Activated naive CD8-positive, alpha-beta T cell treated with anti-CD3 and anti-CD28 coated beads, Interleukin-2, amount 10 ng/mL, durations not matched to agents 7 days and 5 days (primary cell): ENCODE measurements at regions of chr11 and their contacts with region 1.

Region 1: DNA sequence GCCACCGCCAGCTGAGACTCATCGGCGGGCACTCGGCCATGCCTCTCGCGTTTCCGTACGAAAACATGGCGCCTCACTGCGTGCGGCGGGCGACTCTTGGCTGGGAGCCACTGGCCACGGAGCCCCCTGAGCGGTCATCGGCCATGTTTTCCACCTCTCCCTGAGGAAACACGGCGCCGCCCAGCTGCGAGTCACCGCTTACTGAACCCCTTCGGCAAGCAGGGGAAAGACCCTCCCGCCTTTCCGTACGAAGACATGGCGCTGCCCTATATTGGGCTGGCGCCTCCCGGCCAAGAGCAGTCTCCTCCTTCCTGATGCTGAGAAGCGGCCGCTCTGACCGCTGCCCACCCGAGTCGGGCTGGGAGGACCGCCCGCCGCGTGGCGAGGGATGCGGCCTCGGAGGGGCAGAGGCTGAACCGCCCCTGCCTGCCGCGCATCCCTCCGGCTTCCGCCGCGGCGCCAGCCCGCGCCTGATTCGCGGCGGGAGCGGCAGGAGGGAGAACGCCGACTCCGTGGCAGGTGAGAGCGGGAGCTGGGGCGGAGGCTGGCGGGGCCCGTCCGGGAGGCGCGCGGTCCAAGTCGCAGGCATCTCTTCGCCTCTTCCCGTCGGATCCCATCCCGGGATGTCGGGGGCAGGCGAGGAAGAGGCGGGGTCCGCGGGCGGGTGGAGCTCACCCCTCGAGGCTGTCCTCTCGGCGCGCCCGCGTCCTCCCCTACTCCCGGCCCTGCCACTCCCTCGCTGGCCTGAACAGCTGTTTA is at the start of gene TCP11L1:
- DNase-seq: peak; percentile 82
- ATAC-seq: peak; percentile 83
- H3K4me3 Mint-ChIP-seq: peak within 1 kb of the TSS; percentile 90
- H3K27ac Mint-ChIP-seq: peak within 1 kb of the TSS; percentile 92
- H3K4me1 Mint-ChIP-seq: peaks cover 15% of the 10 kb centered on the region
- H3K27me3 Mint-ChIP-seq: peaks cover 2% of the 10 kb centered on the region
- total RNA-seq, gene TCP11L1: 21.2 to 21.5 TPM

Region 2: GRCh38 chr11:32893343-32894148 is 145.9 kb before region 1 on chr11:
- POLR2A ChIA-PET with region 1: interaction called, 12 read pairs
- DNase-seq: peak; percentile 71
- ATAC-seq: peak; percentile 38
- H3K4me3 Mint-ChIP-seq: peak overlapping the region; percentile 98
- H3K27ac Mint-ChIP-seq: peak overlapping the region; percentile 91
- H3K4me1 Mint-ChIP-seq: peaks cover 20% of the 10 kb centered on the region
- H3K27me3 Mint-ChIP-seq: peaks cover 15% of the 10 kb centered on the region

Region 3: DNA sequence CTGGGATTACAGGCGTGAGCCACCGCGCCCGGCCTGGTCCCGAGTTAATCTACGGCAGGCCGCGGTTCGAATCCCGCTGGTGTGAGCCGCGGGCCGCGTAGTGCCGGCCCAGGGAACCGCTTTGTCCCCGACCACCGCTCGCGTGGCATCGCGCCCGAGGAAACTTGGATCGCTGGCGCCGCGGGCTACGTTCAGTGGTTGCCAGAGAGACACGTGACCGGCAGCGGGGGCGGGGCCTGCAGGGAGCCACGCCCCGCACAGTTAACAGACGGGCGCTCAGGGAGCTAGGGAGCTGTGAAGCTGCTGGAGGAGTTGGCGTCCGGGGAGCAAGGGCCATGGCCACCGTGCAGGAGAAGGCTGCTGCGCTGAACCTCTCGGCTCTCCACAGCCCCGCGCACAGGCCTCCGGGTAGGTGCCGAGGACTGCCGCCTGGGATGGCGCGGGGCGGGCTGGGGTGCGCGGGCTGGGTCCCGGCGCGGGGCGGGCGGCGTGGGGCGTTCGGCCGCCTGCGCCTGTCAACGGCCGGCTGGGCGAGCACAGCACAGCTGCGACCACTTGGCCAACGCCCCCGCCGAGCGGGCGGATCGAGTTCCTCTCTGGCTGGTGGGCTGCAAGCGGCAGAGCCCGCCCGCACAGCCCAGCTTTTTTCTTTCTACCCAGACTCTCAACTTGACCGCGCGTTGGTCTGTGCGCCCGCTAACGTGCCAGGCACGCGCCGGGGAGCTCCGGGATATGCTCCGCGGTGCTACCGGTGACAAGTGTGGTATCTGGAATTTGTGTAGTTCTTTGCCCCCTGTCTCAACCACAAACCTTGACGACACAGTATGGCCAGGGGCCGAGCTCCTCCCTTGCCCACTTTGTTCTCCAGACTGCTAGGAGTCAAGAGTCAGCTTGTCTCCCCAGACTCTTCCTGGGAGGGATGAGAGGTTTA is 23.6 kb before region 1 on chr11 and contains the start of gene DEPDC7:
- POLR2A ChIA-PET with region 1: interaction called, 17 read pairs
- DNase-seq: peak; percentile 88
- ATAC-seq: peak; percentile 85
- H3K4me3 Mint-ChIP-seq: peak within 1 kb of the TSS; percentile 90
- H3K27ac Mint-ChIP-seq: peak within 1 kb of the TSS; percentile 61
- H3K4me1 Mint-ChIP-seq: peaks cover 18% of the 10 kb centered on the region
- H3K27me3 Mint-ChIP-seq: peaks cover 32% of the 10 kb centered on the region
- total RNA-seq, gene DEPDC7: 2.7 to 3.6 TPM

Region 4: DNA sequence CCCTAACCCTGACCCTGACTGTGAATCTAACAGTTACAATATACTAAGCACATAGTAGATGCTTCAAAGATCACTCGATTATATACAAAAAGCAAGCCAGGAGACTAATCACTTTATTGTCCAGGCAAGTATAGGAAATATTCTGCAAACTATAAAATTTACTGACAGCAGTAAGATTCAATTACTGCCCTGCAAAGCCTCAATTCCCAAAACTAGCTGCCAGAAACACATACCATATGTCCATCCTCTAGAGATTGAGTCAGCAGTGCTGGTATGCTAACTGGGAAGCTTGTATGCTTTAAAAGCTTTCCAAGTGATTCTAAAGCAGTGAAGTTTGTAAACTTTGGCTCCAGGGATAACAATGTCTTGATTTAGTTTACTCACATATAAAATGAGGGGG is 95.8 kb after region 1 on chr11:
- POLR2A ChIA-PET with region 1: no interaction called
- DNase-seq: no peak
- ATAC-seq: no peak
- H3K4me3 Mint-ChIP-seq: no peak overlapping the region
- H3K27ac Mint-ChIP-seq: no peak overlapping the region
- H3K4me1 Mint-ChIP-seq: peaks cover 14% of the 10 kb centered on the region
- H3K27me3 Mint-ChIP-seq: no peaks in the 10 kb centered on the region